Right ventricle myocardium superior (tissue), 1 donor: ENCODE measurements at regions of chr4 and their contacts with region 1.

Region 1: GRCh38 chr4:40897557-40898203 is 147.9 kb downstream of the NSUN7 start:
- DNase-seq: peak; percentile 79
- ATAC-seq: peak; percentile 72

Region 2: GRCh38 chr4:40736910-40737309 is 160.8 kb before region 1 on chr4:
- intact Hi-C with region 1: loop called (anchors 5 kb)
- DNase-seq: no peak
- ATAC-seq: no peak